ENCODE measurements at regions of chrX and their contacts with region 1.

Region 1: DNA sequence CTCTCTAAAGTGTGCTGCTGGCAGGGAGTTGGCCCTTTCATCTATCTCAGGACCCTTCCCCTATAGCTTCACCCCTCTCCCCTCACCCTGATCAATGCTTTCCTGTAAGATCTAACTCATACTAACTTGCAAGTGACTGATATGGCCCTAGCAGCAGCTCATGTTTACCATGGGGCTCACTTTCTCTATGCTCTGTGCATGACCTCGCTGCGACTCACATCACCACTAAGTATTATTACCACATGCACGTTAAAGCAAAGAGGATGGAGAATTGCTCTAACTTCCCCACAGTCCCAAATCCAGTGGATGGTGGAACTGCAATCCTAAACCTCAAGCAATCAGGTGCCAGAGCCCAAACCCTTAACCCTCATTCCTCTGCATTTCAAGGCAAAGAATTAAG is 626.6 kb downstream of the MID1IP1 start:
- DNase-seq: peak; percentile 58
- H3K4me3 Mint-ChIP-seq: peak overlapping the region; percentile 12
- H3K27ac Mint-ChIP-seq: peak overlapping the region; percentile 95
- H3K4me1 Mint-ChIP-seq: peaks cover 58% of the 10 kb centered on the region
- H3K27me3 Mint-ChIP-seq: no peaks in the 10 kb centered on the region

Region 2: DNA sequence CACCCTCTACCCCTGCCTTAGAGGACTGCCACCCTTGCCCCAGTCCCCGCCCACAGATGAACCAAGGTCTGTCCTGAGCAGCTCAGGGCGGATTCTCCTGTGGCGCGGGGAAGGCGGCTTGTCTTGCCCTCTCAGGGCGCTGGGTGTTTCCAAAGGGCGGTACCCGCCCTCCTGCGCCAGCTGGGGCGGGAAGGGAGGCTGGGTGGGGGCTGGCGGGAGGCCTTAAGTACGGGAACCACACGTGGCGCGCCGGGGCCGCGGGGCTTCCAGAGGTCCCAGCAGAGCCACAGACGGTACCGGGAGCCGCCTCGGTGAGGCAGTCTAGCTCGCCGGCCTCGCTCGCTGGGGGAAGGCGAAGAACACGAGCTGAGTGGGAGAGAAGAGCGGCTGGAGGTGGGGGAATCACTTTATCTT is 265.6 kb before region 1 on chrX:
- intact Hi-C with region 1: loop called (anchors 10 kb)
- DNase-seq: peak; percentile 71
- H3K4me3 Mint-ChIP-seq: peak overlapping the region; percentile 64
- H3K27ac Mint-ChIP-seq: peak overlapping the region; percentile 78
- H3K4me1 Mint-ChIP-seq: peaks cover 39% of the 10 kb centered on the region
- H3K27me3 Mint-ChIP-seq: peaks cover 2% of the 10 kb centered on the region

Region 3: DNA sequence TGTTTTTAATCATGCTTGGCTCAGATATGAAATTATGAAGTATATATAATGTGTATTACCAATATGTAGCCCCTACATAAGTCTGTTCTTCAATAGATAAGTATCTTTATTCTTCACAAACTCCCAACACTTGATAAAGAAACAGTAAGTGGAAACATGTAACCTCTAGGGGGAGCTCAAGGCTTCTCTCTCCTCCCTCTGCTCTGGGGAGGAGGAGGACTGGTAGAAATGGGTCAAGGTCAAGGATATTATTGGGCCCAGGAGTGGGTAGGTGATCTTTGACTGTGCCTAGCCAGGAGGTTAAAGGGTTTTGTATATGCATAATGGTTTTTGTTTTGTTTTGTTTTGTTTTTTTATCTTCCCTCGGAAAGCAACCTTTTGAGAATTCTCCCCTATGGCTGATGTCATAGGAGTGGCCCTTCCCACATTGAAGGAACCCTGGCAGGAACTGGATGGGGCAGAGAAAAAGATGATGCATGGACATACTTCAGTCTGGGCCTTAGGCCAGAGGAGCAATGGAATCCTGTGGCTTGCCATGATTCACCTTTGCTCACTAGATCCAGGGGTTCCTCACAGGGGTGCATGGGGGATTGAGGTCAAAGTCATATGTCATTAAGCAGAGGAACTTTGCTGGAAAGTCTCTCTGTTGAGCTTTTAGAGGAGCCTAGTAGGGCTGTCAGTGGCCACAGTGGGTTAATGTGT is 166.3 kb before region 1 on chrX:
- intact Hi-C with region 1: loop called (anchors 5 kb)
- DNase-seq: peak; percentile 74
- H3K4me3 Mint-ChIP-seq: no peak overlapping the region
- H3K27ac Mint-ChIP-seq: peak overlapping the region; percentile 78
- H3K4me1 Mint-ChIP-seq: peaks cover 34% of the 10 kb centered on the region
- H3K27me3 Mint-ChIP-seq: no peaks in the 10 kb centered on the region

Region 4: GRCh38 chrX:39439906-39440798 is 12.2 kb after region 1 on chrX:
- intact Hi-C with region 1: loop called (anchors 1 kb)
- DNase-seq: peak; percentile 76
- H3K4me3 Mint-ChIP-seq: peak overlapping the region; percentile 62
- H3K27ac Mint-ChIP-seq: peak overlapping the region; percentile 96
- H3K4me1 Mint-ChIP-seq: peaks cover 47% of the 10 kb centered on the region
- H3K27me3 Mint-ChIP-seq: no peaks in the 10 kb centered on the region

Region 5: DNA sequence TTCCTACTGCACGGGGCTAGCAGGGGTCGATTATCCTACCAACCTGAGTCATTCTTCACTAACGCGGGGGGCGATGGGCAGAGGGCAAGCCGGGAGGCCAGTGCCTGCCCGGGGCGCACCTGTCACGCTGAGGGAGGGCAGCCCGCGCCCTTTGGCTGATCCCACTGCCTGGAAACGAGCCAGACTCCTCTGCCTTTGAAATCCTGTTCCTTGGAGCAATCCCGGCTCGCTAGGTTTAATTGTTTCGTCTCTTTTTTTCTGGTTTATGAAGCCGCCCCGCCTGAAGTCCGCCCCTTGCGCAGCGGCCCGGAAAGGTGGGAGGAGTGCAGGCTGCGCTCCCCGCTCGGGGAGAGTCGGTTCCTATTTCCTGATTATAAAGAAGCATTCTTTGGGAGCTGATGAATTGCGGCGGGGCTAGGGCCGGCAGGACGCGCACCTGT is 185.6 kb after region 1 on chrX:
- intact Hi-C with region 1: loop called (anchors 1 kb)
- DNase-seq: peak; percentile 63
- H3K4me3 Mint-ChIP-seq: peak overlapping the region; percentile 90
- H3K27ac Mint-ChIP-seq: peak overlapping the region; percentile 98
- H3K4me1 Mint-ChIP-seq: peaks cover 26% of the 10 kb centered on the region
- H3K27me3 Mint-ChIP-seq: no peaks in the 10 kb centered on the region

Region 6: DNA sequence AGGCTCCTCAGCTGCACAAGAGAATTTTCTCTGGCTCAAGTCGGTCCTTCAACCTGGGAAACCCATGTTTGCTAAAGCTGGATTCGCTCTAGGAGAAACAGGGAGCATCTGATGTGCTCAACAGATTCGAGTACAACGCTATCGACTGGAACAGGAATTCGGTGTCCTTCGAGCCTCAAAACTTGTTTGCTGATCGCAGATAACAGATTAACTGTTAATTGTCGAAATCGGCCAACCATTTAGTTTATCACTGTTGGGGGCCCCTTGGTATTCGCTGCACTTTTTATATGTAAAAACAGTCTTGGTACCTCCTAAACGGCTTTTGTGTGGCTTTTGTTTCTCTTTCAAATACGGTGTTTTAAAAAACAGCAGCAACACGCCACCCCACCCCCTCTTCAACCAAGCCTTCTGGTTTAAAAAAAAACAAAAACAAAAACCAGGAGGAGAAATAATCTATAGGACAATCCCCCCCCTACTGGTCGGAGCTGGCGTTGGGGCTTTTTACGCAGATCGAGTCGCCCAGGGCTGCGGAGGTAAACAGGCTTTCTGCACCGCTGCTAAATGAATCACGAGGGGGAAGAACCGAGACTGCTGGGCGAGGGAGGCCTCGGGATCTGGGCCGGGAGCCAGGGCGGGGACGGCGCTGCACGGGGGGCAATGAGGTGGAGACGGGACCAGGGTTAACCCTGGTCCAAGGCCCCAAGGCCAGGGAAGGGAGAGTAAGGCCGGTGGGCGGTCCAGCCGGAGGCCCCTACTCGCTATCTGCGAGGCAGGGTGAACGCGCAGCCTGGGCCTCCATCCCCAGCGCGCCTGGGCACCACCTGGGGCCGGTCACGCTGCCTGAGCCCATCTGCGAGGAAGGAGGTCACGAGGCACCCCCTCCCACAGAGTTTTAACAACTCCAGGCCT is 741.5 kb after region 1 on chrX:
- intact Hi-C with region 1: loop called (anchors 10 kb)
- DNase-seq: peak; percentile 93
- H3K4me3 Mint-ChIP-seq: peak overlapping the region; percentile 93
- H3K27ac Mint-ChIP-seq: peak overlapping the region; percentile 93
- H3K4me1 Mint-ChIP-seq: peaks cover 44% of the 10 kb centered on the region
- H3K27me3 Mint-ChIP-seq: peaks cover under 1% of the 10 kb centered on the region